ENCODE measurements at regions of chr11 and their contacts with region 1.

Region 1: GRCh38 chr11:119205574-119206510 is at the start of gene CBL:
- DNase-seq: peak; percentile 99
- H3K4me3 Mint-ChIP-seq: peak within 1 kb of the TSS; percentile 93
- H3K27ac Mint-ChIP-seq: peak within 1 kb of the TSS; percentile 88
- H3K4me1 Mint-ChIP-seq: peaks cover 29% of the 10 kb centered on the region
- H3K27me3 Mint-ChIP-seq: no peaks in the 10 kb centered on the region
- total RNA-seq, gene CBL: 25.3 to 25.7 TPM

Region 2: DNA sequence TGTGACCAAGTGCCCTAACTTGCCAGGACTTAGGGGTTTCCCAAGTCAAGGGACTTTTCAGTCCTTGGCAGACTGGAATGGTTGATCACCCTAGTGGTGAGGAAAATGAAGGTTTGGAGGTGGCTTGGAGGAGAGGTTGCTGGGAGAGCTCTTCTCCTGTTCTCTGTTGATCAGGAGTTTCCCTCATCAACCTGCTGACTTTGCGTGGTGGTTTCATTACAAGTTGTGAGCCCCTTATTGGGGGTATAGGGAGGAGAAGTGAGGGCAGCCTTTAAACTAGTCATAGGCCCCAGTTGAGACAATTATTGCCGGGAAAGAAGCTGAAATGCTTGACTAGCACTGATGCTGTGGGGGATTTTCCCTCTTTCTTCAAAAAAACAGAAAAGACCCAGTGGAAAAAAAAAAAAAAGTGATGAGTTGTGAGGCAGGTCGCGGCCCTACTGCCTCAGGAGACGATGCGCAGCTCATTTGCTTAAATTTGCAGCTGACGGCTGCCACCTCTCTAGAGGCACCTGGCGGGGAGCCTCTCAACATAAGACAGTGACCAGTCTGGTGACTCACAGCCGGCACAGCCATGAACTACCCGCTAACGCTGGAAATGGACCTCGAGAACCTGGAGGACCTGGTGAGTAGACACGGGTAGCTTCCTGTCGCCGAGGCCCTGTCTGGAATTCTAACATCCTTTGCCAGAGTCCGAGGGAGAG is 322.3 kb before region 1 on chr11 and contains the start of gene CXCR5:
- CTCF ChIA-PET with region 1: no interaction called
- intact Hi-C with region 1: no loop called
- DNase-seq: peak; percentile 87
- H3K4me3 Mint-ChIP-seq: peak within 1 kb of the TSS; percentile 83
- H3K27ac Mint-ChIP-seq: peak within 1 kb of the TSS; percentile 99
- H3K4me1 Mint-ChIP-seq: peaks cover 84% of the 10 kb centered on the region
- H3K27me3 Mint-ChIP-seq: no peaks in the 10 kb centered on the region
- total RNA-seq, gene CXCR5: 25.6 to 26.1 TPM

Region 3: GRCh38 chr11:118997627-118998387 is 208.0 kb before region 1 on chr11 and contains the start of gene CENATAC:
- CTCF ChIA-PET with region 1: no interaction called
- intact Hi-C with region 1: loop called (anchors 5 kb)
- DNase-seq: peak; percentile 98
- H3K4me3 Mint-ChIP-seq: peak within 1 kb of the TSS; percentile 88
- H3K27ac Mint-ChIP-seq: peak within 1 kb of the TSS; percentile 96
- H3K4me1 Mint-ChIP-seq: peaks cover 33% of the 10 kb centered on the region
- H3K27me3 Mint-ChIP-seq: no peaks in the 10 kb centered on the region
- total RNA-seq, gene CENATAC: 17.4 to 18.0 TPM

Region 4: GRCh38 chr11:119057000-119057769 is 148.7 kb before region 1 on chr11 and contains the start of gene HYOU1:
- CTCF ChIA-PET with region 1: no interaction called
- intact Hi-C with region 1: loop called (anchors 2 kb)
- DNase-seq: peak; percentile 99
- H3K4me3 Mint-ChIP-seq: peak within 1 kb of the TSS; percentile 98
- H3K27ac Mint-ChIP-seq: peak within 1 kb of the TSS; percentile 95
- H3K4me1 Mint-ChIP-seq: peaks cover 53% of the 10 kb centered on the region
- H3K27me3 Mint-ChIP-seq: no peaks in the 10 kb centered on the region
- total RNA-seq, gene HYOU1: 108 to 116 TPM

Region 5: DNA sequence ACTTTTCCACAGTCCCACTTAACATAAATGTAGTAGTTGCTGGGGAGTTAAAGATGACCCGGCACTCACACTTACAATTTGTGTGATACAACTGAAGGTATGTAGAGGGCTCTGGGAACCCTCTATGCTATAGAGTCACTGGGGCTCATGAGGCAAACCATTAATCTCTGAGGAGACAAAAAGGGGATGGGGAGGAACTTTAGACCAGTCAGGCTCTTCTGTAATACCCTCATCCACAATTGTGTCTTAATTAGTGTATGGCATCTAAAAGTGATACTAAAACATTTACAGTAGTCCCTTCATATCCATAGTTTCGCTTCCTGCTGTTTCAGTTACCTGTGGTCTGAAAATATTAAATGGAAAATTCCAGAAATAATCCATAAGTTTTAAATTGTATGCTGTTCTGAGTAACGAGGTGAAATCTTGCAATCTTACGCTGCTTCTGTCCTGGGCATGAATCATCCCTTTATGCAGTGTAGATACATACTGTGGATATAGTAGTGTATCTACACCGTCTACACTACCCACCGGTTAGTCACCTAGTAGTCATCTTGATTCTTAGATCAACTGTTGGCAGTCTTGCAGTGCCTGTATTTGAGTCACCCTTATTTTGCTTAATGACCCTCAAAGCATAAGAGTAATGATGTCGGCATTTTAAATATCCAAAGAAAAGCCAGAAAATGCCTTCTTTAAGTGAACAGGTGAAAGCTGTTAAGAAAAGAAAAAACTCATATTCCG is 12.5 kb after region 1 on chr11:
- CTCF ChIA-PET with region 1: interaction called, 10 read pairs
- intact Hi-C with region 1: no loop called
- DNase-seq: peak; percentile 37
- H3K4me3 Mint-ChIP-seq: no peak overlapping the region
- H3K27ac Mint-ChIP-seq: peak overlapping the region; percentile 33
- H3K4me1 Mint-ChIP-seq: peaks cover 57% of the 10 kb centered on the region
- H3K27me3 Mint-ChIP-seq: no peaks in the 10 kb centered on the region

Region 6: DNA sequence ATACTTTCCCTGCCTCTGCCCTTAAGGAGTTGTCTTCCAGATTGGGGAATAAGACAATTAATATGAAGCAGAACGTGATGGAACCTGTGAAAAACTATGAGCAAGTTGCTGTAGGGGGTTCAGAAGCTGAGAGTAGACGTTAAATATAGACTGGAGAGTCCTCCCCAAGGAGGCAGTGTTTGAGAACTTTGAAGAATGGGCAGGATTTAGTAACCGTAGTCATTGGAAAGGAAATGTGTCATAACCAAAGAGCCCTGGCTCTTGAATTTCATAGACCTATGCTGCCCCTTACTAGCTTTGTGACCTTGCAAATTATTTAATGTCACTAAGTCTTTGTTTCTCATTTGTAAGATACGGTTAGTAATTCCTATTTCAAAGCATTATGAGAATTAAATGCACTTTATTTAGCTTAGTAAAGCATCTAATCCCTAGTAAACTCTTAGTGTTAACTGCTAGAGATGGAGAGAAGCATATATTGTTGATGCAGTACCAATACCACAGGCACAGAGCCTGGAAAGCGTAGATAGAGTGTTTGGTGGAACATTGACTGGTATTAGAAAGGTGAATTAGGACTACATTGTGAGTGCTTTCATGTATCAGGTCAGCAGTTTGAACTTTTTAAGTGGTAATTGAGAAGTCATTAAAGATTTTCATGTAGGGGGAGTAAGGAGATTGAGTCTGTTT is 57.0 kb after region 1 on chr11:
- CTCF ChIA-PET with region 1: interaction called, 8 read pairs
- intact Hi-C with region 1: loop called (anchors 1 kb)
- DNase-seq: peak; percentile 35
- H3K4me3 Mint-ChIP-seq: no peak overlapping the region
- H3K27ac Mint-ChIP-seq: no peak overlapping the region
- H3K4me1 Mint-ChIP-seq: peaks cover 56% of the 10 kb centered on the region
- H3K27me3 Mint-ChIP-seq: no peaks in the 10 kb centered on the region